CD4-positive, alpha-beta memory T cell (primary cell): ENCODE measurements at regions of chr14 and their contacts with region 1.

Region 1: DNA sequence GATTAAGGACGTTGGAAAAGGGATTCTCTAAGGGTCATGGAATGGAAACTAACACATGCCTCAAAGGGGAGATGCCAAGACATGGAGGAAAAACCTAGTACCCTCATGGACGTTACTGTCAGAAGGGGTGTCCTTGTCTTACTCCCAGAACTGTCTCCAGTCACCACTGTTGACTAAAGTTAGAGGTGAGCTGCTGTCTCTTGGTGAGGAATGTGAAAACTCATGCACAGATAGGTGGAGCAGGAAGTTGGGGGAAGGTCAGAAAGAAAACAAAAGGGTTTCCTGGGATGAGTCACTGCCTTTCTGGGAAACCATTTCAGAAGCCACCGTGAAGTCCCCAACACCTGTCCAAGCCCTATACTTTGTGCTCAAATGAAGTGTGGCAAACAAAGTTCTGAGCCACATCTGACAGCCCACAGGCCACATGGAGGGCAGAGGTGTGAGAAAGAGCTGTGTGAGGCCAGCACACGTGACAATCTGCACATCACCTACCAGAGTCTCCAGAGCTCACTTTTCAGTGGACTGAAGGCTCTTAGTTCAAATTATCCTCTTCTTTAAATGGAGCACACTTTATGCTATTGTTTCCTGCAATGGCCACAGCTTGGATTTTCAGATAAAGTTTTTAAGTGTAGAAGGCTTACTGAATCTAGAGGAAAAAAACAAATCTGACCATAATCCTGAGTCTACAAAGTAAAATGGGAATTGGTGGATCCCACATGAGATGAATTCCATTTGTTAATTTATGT is 92.9 kb upstream of the EGLN3 start:
- DNase-seq: peak; percentile 61 to 77 (median 71)
- H3K4me3 ChIP-seq: no peak overlapping the region
- H3K4me3 Mint-ChIP-seq: peak overlapping the region in 7 of 8 donors; percentile 54 to 78 (median 65)
- H3K27ac ChIP-seq: no peak overlapping the region
- H3K27ac Mint-ChIP-seq: peak overlapping the region; percentile 19 to 85 (median 70)
- H3K4me1 ChIP-seq: peaks cover 61% of the 10 kb centered on the region
- H3K4me1 Mint-ChIP-seq: peaks cover 37 to 62% (median 50%) of the 10 kb centered on the region in 4 donors
- H3K27me3 ChIP-seq: no peaks in the 10 kb centered on the region
- H3K27me3 Mint-ChIP-seq: no peaks in the 10 kb centered on the region

Region 2: GRCh38 chr14:33848706-33849454 is 194.9 kb before region 1 on chr14:
- CTCF ChIA-PET with region 1: no interaction called
- POLR2A ChIA-PET with region 1: no interaction called
- intact Hi-C with region 1: no loop called
- DNase-seq: no peak
- H3K4me3 ChIP-seq: no peak overlapping the region
- H3K4me3 Mint-ChIP-seq: no peak overlapping the region
- H3K27ac ChIP-seq: no peak overlapping the region
- H3K27ac Mint-ChIP-seq: no peak overlapping the region
- H3K4me1 ChIP-seq: no peaks in the 10 kb centered on the region
- H3K4me1 Mint-ChIP-seq: peaks cover 0 to 2% (median 0%) of the 10 kb centered on the region in 4 donors
- H3K27me3 ChIP-seq: no peaks in the 10 kb centered on the region
- H3K27me3 Mint-ChIP-seq: peaks cover 3% of the 10 kb centered on the region in 2 donors

Region 3: GRCh38 chr14:34018564-34019244 is 25.1 kb before region 1 on chr14:
- CTCF ChIA-PET with region 1: no interaction called
- POLR2A ChIA-PET with region 1: interaction called, 10 read pairs
- intact Hi-C with region 1: no loop called
- DNase-seq: peak in 3 of 5 donors; percentile 35 to 43 (median 38)
- H3K4me3 ChIP-seq: peak overlapping the region; percentile 9 to 34
- H3K4me3 Mint-ChIP-seq: peak overlapping the region; percentile 79 to 99 (median 90)
- H3K27ac ChIP-seq: peak overlapping the region; percentile 46
- H3K27ac Mint-ChIP-seq: peak overlapping the region; percentile 51 to 98 (median 94)
- H3K4me1 ChIP-seq: peaks cover 9% of the 10 kb centered on the region
- H3K4me1 Mint-ChIP-seq: peaks cover 5 to 37% (median 11%) of the 10 kb centered on the region in 4 donors
- H3K27me3 ChIP-seq: no peaks in the 10 kb centered on the region
- H3K27me3 Mint-ChIP-seq: no peaks in the 10 kb centered on the region

Region 4: GRCh38 chr14:34059855-34060638 is 16.2 kb after region 1 on chr14:
- CTCF ChIA-PET with region 1: interaction called, 3 read pairs
- POLR2A ChIA-PET with region 1: interaction called, 10 read pairs
- intact Hi-C with region 1: loop called (anchors 2 kb)
- DNase-seq: peak; percentile 36 to 54 (median 46)
- H3K4me3 ChIP-seq: peak overlapping the region; percentile 17 to 47
- H3K4me3 Mint-ChIP-seq: peak overlapping the region; percentile 87 to 93 (median 88)
- H3K27ac ChIP-seq: no peak overlapping the region
- H3K27ac Mint-ChIP-seq: peak overlapping the region; percentile 46 to 91 (median 84)
- H3K4me1 ChIP-seq: peaks cover 8% of the 10 kb centered on the region
- H3K4me1 Mint-ChIP-seq: peaks cover 2 to 28% (median 7%) of the 10 kb centered on the region in 4 donors
- H3K27me3 ChIP-seq: no peaks in the 10 kb centered on the region
- H3K27me3 Mint-ChIP-seq: peaks cover 0 to 1% of the 10 kb centered on the region in 2 donors